Psoas muscle (tissue), 8 donors: ENCODE measurements at regions of chr6 and their contacts with region 1.

Region 1: DNA sequence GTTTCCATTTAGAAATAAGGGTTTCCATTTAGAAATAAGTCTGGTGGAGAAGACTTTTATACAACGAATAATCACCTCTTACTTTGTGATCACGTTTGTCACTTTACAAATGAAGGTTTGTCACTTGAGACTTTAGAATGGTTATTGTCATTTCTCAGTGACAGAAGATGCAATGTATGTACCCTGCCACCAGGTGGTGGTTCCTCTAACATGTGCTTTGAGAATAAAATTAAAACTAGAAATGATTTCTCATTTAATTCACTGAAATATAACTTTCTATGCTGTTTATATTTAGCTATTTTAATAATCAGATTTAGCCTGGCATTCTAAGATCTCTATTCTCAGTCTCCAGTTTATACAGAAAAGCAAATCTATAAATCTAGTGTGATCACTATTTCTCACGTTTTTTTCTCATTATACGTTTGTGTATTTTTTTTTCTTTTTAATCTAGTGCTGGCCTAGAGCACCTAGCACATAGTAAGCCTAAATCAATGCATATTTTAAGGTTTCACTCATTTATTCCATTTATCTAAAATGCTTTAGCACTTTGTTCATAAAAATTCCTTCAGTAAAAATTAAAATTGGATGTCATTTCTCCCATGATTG is 57.4 kb upstream of the TFAP2D start:
- DNase-seq: no peak
- ATAC-seq: no peak
- H3K4me3 ChIP-seq: no peak overlapping the region
- H3K27ac ChIP-seq: no peak overlapping the region
- H3K4me1 ChIP-seq: no peaks in the 10 kb centered on the region
- H3K27me3 ChIP-seq: peaks cover 0 to 2% (median 0%) of the 10 kb centered on the region in 3 donors
- CTCF ChIP-seq: peak; percentile 38

Region 2: GRCh38 chr6:50591135-50591534 is 64.8 kb before region 1 on chr6:
- intact Hi-C with region 1: no loop called
- DNase-seq: no peak
- ATAC-seq: no peak
- H3K4me3 ChIP-seq: no peak overlapping the region
- H3K27ac ChIP-seq: no peak overlapping the region
- H3K4me1 ChIP-seq: no peaks in the 10 kb centered on the region
- H3K27me3 ChIP-seq: no peaks in the 10 kb centered on the region
- CTCF ChIP-seq: no peak

Region 3: DNA sequence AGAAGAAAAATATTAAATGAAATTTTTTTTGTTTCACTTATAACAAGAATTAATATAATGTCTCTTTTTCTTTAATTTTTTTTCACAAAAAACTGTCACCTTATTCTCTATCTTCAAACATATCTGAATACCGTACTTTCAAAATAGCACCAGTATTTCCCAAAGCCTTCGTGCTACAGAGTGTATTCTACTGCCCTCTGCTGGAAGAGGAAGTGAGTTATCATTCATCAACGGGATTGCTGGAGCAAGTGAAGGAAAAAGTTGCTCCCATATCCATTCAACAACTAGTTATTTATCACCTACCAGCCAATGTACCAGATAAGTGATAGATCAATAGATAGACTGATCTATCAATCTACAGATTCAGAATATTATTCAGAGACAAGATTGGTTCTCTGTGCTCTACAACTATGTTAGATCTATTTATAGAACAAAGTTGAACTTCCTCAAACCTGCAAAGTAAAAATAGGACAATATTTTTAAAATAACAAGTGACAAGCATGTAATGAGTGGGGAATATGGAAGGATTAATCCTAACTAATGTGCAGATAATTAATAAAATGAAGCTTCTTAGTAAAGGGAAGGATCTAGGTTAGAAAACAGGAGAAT is 136.1 kb after region 1 on chr6:
- intact Hi-C with region 1: loop called in 1 of 2 experiments (anchors 10 kb)
- DNase-seq: no peak
- ATAC-seq: no peak
- H3K4me3 ChIP-seq: no peak overlapping the region
- H3K27ac ChIP-seq: no peak overlapping the region
- H3K4me1 ChIP-seq: no peaks in the 10 kb centered on the region
- H3K27me3 ChIP-seq: no peaks in the 10 kb centered on the region
- CTCF ChIP-seq: peak; percentile 57

Region 4: GRCh38 chr6:50816115-50816675 is 160.2 kb after region 1 on chr6:
- intact Hi-C with region 1: no loop called
- DNase-seq: peak; percentile 56 to 72
- ATAC-seq: peak in 2 of 4 donors; percentile 55 to 81
- H3K4me3 ChIP-seq: peak overlapping the region; percentile 59
- H3K27ac ChIP-seq: no peak overlapping the region
- H3K4me1 ChIP-seq: peaks cover 4% of the 10 kb centered on the region
- H3K27me3 ChIP-seq: peaks cover 10 to 70% (median 14%) of the 10 kb centered on the region in 3 donors
- CTCF ChIP-seq: peak; percentile 81